ENCODE measurements at regions of chr15 and their contacts with region 1.

Region 1: DNA sequence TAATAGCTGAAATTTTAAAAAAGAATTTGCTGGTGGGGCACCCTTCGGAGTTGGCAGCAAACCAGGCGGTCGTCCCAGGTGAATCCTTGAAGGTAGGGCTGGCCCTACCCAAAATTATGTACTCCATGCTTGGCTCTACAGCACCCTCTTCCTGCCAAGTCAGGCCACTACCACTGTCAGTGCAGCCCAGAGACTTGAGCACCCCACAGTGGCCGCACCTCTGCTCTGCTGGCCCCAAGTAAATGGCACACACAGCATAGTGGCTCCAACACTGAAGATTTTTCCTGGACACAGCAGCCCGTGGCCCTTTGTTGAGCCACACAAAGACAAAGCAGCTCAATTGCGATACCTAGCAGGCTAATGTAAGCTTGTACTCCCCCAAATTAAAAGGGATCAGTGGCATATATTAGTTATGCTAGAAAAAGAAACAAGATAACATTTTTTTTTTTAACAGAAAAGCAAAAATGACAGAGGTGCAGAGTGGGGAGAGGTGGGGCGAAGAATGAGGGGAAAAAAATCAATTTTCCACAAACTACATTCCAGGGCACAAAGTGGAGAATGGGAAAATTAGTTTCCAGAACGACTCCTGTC is 250.5 kb downstream of the UACA start:
- DNase-seq: peak; percentile 88
- H3K4me3 Mint-ChIP-seq: no peak overlapping the region
- H3K27ac Mint-ChIP-seq: no peak overlapping the region
- H3K4me1 Mint-ChIP-seq: peaks cover 24% of the 10 kb centered on the region
- H3K27me3 Mint-ChIP-seq: no peaks in the 10 kb centered on the region

Region 2: GRCh38 chr15:70362886-70363285 is 150.0 kb before region 1 on chr15:
- CTCF ChIA-PET with region 1: no interaction called
- intact Hi-C with region 1: loop called (anchors 10 kb)
- DNase-seq: no peak
- H3K4me3 Mint-ChIP-seq: no peak overlapping the region
- H3K27ac Mint-ChIP-seq: no peak overlapping the region
- H3K4me1 Mint-ChIP-seq: peaks cover 6% of the 10 kb centered on the region
- H3K27me3 Mint-ChIP-seq: peaks cover 5% of the 10 kb centered on the region

Region 3: DNA sequence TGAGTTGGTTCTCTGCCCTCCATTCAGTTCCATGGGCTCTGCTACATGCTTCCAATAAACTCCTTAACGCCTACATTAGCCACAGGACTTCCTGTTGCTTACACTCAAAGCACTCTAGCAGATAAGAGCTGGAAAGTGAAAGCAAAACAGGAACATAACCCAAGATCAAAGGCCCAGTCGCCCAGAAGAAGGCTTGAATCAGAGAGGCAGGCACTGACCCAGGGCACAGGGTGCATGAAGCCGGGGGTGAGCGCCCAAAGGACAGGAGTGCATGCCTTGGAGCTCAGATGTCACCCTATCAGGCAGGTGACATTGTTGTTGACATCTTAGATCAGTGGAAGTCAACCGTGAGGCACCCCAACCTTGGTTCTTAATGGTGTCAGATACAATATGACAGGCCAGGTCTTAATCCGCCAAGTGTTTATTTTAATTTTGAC is 15.4 kb after region 1 on chr15:
- CTCF ChIA-PET with region 1: interaction called, 17 read pairs
- intact Hi-C with region 1: loop called (anchors 1 kb)
- DNase-seq: peak; percentile 78
- H3K4me3 Mint-ChIP-seq: peak overlapping the region; percentile 62
- H3K27ac Mint-ChIP-seq: peak overlapping the region; percentile 85
- H3K4me1 Mint-ChIP-seq: peaks cover 74% of the 10 kb centered on the region
- H3K27me3 Mint-ChIP-seq: no peaks in the 10 kb centered on the region